ENCODE measurements at regions of chr17 and their contacts with region 1.

Region 1: GRCh38 chr17:55348749-55349354 is 72.8 kb downstream of the MMD start:
- DNase-seq: peak; percentile 72
- H3K4me3 ChIP-seq: no peak overlapping the region
- H3K27ac ChIP-seq: no peak overlapping the region
- H3K4me1 ChIP-seq: peaks cover 0 to 17% (median 0%) of the 10 kb centered on the region in 4 donors
- H3K27me3 ChIP-seq: no peaks in the 10 kb centered on the region
- CTCF ChIP-seq: peak; percentile 64 to 84 (median 76)
- EP300 ChIP-seq: no peak
- POLR2A ChIP-seq: no peak

Region 2: GRCh38 chr17:54992797-54993639 is 355.8 kb before region 1 on chr17:
- intact Hi-C with region 1: loop called (anchors 1 kb)
- DNase-seq: no peak
- H3K4me3 ChIP-seq: no peak overlapping the region
- H3K27ac ChIP-seq: no peak overlapping the region
- H3K4me1 ChIP-seq: no peaks in the 10 kb centered on the region
- H3K27me3 ChIP-seq: no peaks in the 10 kb centered on the region
- CTCF ChIP-seq: peak in 3 of 4 experiments; percentile 47 to 67 (median 56)
- EP300 ChIP-seq: no peak
- POLR2A ChIP-seq: no peak

Region 3: DNA sequence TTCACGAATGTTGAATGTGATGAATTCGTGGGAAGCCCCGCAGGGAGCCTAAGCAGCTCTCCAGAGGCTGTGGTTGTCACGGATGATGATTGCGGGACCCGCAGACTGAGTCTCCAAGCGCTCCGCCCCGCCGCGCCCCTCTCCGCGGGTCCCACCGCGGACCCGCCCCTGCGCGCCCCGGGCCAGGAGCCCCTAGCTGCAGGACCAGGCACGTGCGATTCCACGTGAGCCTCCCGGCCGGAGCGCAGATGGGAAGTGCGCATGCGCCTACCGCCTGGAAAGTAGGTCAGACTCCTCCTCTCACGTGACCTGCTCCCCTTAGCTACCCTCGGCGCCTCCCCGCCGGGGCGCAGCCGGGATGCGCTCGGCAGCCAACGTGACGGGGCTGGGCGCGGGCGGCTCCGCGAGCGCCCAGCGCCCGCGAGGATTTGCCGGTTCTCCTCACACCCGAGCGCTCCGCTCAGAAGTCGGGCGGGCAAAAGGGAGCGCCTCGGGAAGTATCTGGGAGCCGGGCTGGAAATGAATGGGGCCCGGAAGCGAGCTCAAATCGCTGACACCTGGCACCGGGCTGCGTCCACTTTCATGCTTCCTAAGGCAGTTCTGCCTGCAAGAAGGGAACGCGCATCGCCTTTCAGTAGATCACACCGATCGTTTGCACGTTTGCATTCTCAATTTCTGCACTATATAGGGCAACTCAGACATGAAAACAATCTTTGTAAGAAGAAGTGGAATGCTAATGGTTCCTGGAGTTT is 110.5 kb before region 1 on chr17:
- intact Hi-C with region 1: loop called (anchors 2 kb)
- DNase-seq: peak; percentile 97
- H3K4me3 ChIP-seq: peak overlapping the region; percentile 31 to 55 (median 52)
- H3K27ac ChIP-seq: peak overlapping the region; percentile 82 to 86 (median 85)
- H3K4me1 ChIP-seq: peaks cover 0 to 22% (median 9%) of the 10 kb centered on the region in 4 donors
- H3K27me3 ChIP-seq: no peaks in the 10 kb centered on the region
- CTCF ChIP-seq: no peak
- EP300 ChIP-seq: peak in 1 of 4 donors; percentile 35
- POLR2A ChIP-seq: no peak

Region 4: GRCh38 chr17:55421179-55421934 is 72.5 kb after region 1 on chr17 and contains the start of gene MMD:
- intact Hi-C with region 1: loop called (anchors 5 kb)
- DNase-seq: peak; percentile 78
- H3K4me3 ChIP-seq: peak within 1 kb of the TSS; percentile 71 to 97 (median 96)
- H3K27ac ChIP-seq: peak within 1 kb of the TSS; percentile 90 to 97 (median 94)
- H3K4me1 ChIP-seq: peaks cover 0 to 39% (median 27%) of the 10 kb centered on the region in 4 donors
- H3K27me3 ChIP-seq: no peaks in the 10 kb centered on the region
- CTCF ChIP-seq: no peak
- EP300 ChIP-seq: peak in 1 of 4 donors; percentile 3
- POLR2A ChIP-seq: peak; percentile 30 to 42
- total RNA-seq, gene MMD: 26.9 to 51.3 (median 34.6) TPM

Region 5: GRCh38 chr17:55513885-55514591 is 165.2 kb after region 1 on chr17:
- intact Hi-C with region 1: loop called (anchors 1 kb)
- DNase-seq: peak; percentile 81
- H3K4me3 ChIP-seq: no peak overlapping the region
- H3K27ac ChIP-seq: no peak overlapping the region
- H3K4me1 ChIP-seq: peaks cover 0 to 13% (median 0%) of the 10 kb centered on the region in 4 donors
- H3K27me3 ChIP-seq: no peaks in the 10 kb centered on the region
- CTCF ChIP-seq: peak; percentile 76 to 95 (median 82)
- EP300 ChIP-seq: no peak
- POLR2A ChIP-seq: no peak